Caco-2 (cell line): ENCODE measurements at regions of chrX and their contacts with region 1.

Region 1: DNA sequence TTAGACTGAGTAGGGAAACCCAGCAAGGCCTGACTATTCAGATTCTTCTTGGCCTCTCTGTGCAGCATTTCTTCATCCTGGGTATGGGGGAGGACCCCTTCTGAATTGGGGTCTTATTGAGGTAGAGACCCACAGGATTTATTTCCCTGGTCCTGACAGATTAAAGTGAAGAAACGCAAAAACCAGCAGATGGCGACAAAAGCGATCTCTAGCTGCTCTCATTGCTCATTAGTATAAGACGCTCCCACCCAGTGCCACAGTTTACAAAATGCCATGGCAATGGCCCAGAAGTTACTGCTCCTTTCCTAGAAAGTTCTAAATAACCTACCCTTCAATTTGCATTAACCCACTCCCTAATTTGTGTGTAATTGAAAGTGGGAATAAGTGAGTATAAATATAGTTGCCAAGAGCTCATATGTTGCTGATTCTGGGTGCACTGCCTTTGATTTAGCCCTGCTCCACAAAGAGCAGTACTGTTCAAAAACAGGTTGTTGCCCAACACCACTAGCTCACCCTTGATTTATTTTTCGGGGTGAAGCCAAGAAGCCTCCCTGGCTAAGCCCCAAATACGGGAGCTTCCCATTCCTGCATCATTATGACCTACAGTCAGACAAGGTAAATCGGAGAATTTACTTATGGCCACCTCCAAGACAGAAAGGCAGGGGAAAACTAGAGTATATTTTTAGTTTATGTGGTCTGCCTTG is 3.7 kb upstream of the BEX4 start:
- DNase-seq: peak; percentile 23 to 35
- H3K4me3 ChIP-seq: no peak overlapping the region
- H3K4me3 Mint-ChIP-seq: no peak overlapping the region
- H3K27ac Mint-ChIP-seq: no peak overlapping the region
- H3K4me1 ChIP-seq: no peaks in the 10 kb centered on the region
- H3K4me1 Mint-ChIP-seq: no peaks in the 10 kb centered on the region
- H3K27me3 ChIP-seq: no peaks in the 10 kb centered on the region
- H3K27me3 Mint-ChIP-seq: no peaks in the 10 kb centered on the region
- CTCF ChIP-seq: peak; percentile 40 to 45

Region 2: GRCh38 chrX:103248553-103248952 is 37.4 kb after region 1 on chrX:
- CTCF ChIA-PET with region 1: interaction called, 4 read pairs
- POLR2A ChIA-PET with region 1: no interaction called
- intact Hi-C with region 1: loop called (anchors 1 kb)
- DNase-seq: peak in 1 of 2 experiments; percentile 3
- H3K4me3 ChIP-seq: no peak overlapping the region
- H3K4me3 Mint-ChIP-seq: no peak overlapping the region
- H3K27ac Mint-ChIP-seq: no peak overlapping the region
- H3K4me1 ChIP-seq: peaks cover 3% of the 10 kb centered on the region; the same call in 1 of the 2 replicates
- H3K4me1 Mint-ChIP-seq: peaks cover 3% of the 10 kb centered on the region
- H3K27me3 ChIP-seq: no peaks in the 10 kb centered on the region
- H3K27me3 Mint-ChIP-seq: no peaks in the 10 kb centered on the region
- CTCF ChIP-seq: peak; percentile 18 to 20

Region 3: DNA sequence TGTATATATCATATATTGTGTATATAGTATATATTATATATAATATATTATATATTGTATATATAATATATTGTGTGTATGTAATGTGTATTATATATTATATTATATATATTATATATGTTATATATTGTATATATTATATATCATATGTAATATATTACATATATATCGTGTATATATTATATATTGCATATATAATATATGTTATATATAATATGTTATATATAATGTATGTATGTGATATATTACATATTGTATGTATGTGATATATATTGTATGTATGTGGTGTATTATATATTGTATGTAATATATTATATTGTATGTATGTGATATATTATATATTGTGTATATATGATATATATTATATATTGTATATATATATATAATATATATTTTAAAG is 277.6 kb after region 1 on chrX:
- CTCF ChIA-PET with region 1: interaction called, 3 read pairs
- POLR2A ChIA-PET with region 1: no interaction called
- intact Hi-C with region 1: loop called (anchors 1 kb)
- DNase-seq: no peak
- H3K4me3 ChIP-seq: no peak overlapping the region
- H3K4me3 Mint-ChIP-seq: no peak overlapping the region
- H3K27ac Mint-ChIP-seq: no peak overlapping the region
- H3K4me1 ChIP-seq: no peaks in the 10 kb centered on the region
- H3K4me1 Mint-ChIP-seq: no peaks in the 10 kb centered on the region
- H3K27me3 ChIP-seq: no peaks in the 10 kb centered on the region
- H3K27me3 Mint-ChIP-seq: no peaks in the 10 kb centered on the region
- CTCF ChIP-seq: no peak